Heart left ventricle (tissue), 16 donors: ENCODE measurements at regions of chr10 and their contacts with region 1.

Region 1: DNA sequence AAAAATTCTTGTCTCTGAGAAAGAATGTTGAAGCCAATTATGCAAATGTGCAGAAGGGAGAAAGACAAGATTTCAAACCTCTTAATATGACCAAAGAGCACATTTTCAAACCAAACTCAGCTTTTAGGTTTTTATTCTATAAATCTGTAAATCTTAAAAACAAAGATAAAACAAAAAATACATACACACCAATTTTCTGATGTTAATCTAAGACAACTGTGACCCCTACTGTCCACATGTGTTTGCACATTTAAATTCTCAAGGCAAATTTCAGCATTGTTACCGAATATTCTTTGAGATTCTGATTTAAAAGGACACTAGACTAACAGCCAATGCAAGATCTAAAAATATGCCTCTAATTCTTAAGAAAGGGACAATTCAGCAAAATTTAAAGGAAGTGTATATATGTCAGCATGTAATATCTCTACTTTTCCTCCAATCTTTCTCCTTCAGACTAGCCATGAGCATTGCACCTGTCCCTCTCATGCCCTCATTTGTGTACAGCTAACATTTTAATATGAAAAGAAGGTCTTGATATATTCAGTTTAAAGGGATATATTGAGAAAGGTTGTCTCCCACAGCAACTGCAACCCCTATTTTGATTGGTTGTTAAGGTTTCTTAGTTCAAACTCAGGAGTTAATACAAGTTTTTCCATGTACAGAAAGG is 417.9 kb downstream of the IPMK start:
- DNase-seq: no peak
- ATAC-seq: no peak
- H3K4me3 ChIP-seq: no peak overlapping the region
- H3K27ac ChIP-seq: no peak overlapping the region
- H3K4me1 ChIP-seq: peaks cover 0 to 8% (median 0%) of the 10 kb centered on the region in 12 donors
- H3K27me3 ChIP-seq: no peaks in the 10 kb centered on the region
- CTCF ChIP-seq: peak in 9 of 12 donors; percentile 14 to 55 (median 45)
- POLR2A ChIP-seq: no peak

Region 2: DNA sequence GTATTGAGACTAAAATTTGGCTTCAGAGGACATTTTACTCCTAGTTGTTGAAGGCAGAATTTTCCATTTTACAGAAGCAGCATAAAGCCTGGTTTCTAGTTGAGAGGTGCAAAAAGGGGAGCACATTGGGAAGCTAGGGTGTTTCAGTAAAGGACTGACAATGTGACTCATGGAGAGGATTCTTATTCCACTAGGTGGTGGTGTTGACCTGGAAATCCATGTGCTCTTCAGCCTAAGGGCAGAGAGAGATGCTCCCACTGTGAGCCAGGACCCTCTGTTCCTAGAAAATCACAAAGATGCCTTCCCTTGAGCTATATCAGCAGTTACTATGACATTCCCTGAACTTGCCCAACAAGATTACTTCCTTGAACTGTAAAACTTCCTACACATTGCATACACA is 269.9 kb before region 1 on chr10:
- intact Hi-C with region 1: loop called in 6 of 10 experiments (anchors 5 to 10 kb)
- DNase-seq: no peak
- ATAC-seq: peak in 3 of 4 donors; percentile 57 to 67 (median 58)
- H3K4me3 ChIP-seq: no peak overlapping the region
- H3K27ac ChIP-seq: no peak overlapping the region
- H3K4me1 ChIP-seq: no peaks in the 10 kb centered on the region
- H3K27me3 ChIP-seq: no peaks in the 10 kb centered on the region
- CTCF ChIP-seq: peak in 11 of 12 donors; percentile 5 to 56 (median 37)
- POLR2A ChIP-seq: no peak

Region 3: GRCh38 chr10:57593983-57594573 is 255.7 kb before region 1 on chr10:
- intact Hi-C with region 1: loop called in 2 of 10 experiments (anchors 5 to 10 kb)
- DNase-seq: no peak
- ATAC-seq: no peak
- H3K4me3 ChIP-seq: no peak overlapping the region
- H3K27ac ChIP-seq: no peak overlapping the region
- H3K4me1 ChIP-seq: no peaks in the 10 kb centered on the region
- H3K27me3 ChIP-seq: no peaks in the 10 kb centered on the region
- CTCF ChIP-seq: no peak
- POLR2A ChIP-seq: no peak

Region 4: DNA sequence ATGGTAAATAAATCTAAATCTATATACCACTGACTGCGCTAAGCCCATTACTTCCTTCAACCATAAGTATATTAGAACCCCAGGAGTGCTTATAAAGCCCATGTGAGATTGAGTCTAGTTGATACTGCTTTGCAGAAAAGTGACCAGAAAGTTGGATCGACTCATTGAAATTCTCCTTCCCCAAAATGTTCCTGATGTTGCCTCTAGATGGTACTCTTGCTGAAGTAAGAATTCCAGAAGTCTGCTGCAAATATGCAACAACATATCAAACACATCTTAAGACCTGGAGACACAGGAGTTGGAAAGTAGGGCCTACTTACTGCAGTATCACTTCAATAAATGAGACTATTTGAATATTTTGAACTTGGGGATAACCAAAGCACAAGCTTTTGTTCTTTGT is 132.9 kb before region 1 on chr10:
- intact Hi-C with region 1: loop called in 4 of 10 experiments (anchors 10 kb)
- DNase-seq: no peak
- ATAC-seq: no peak
- H3K4me3 ChIP-seq: no peak overlapping the region
- H3K27ac ChIP-seq: no peak overlapping the region
- H3K4me1 ChIP-seq: peaks cover 0 to 11% (median 0%) of the 10 kb centered on the region in 12 donors
- H3K27me3 ChIP-seq: no peaks in the 10 kb centered on the region
- CTCF ChIP-seq: peak in 10 of 12 donors; percentile 12 to 51 (median 34)
- POLR2A ChIP-seq: no peak

Region 5: GRCh38 chr10:57723305-57723704 is 126.5 kb before region 1 on chr10:
- intact Hi-C with region 1: loop called in 4 of 10 experiments (anchors 10 kb)
- DNase-seq: no peak
- ATAC-seq: no peak
- H3K4me3 ChIP-seq: no peak overlapping the region
- H3K27ac ChIP-seq: no peak overlapping the region
- H3K4me1 ChIP-seq: no peaks in the 10 kb centered on the region
- H3K27me3 ChIP-seq: no peaks in the 10 kb centered on the region
- CTCF ChIP-seq: no peak
- POLR2A ChIP-seq: no peak

Region 6: GRCh38 chr10:57905861-57906260 is 56.0 kb after region 1 on chr10:
- intact Hi-C with region 1: no loop called
- DNase-seq: no peak
- ATAC-seq: no peak
- H3K4me3 ChIP-seq: no peak overlapping the region
- H3K27ac ChIP-seq: no peak overlapping the region
- H3K4me1 ChIP-seq: no peaks in the 10 kb centered on the region
- H3K27me3 ChIP-seq: no peaks in the 10 kb centered on the region
- CTCF ChIP-seq: no peak
- POLR2A ChIP-seq: no peak

Region 7: GRCh38 chr10:57964351-57964750 is 114.5 kb after region 1 on chr10:
- intact Hi-C with region 1: loop called in 3 of 10 experiments (anchors 2 to 10 kb)
- DNase-seq: peak; percentile 43 to 81 (median 61)
- ATAC-seq: peak; percentile 92 to 97 (median 94)
- H3K4me3 ChIP-seq: no peak overlapping the region
- H3K27ac ChIP-seq: peak overlapping the region in 6 of 12 donors; percentile 42 to 73 (median 57)
- H3K4me1 ChIP-seq: peaks cover 0 to 21% (median 0%) of the 10 kb centered on the region in 12 donors
- H3K27me3 ChIP-seq: no peaks in the 10 kb centered on the region
- CTCF ChIP-seq: no peak
- POLR2A ChIP-seq: peak in 1 of 2 donors; percentile 27